GM23248 (cell line): ENCODE measurements at regions of chr12 and their contacts with region 1.

Region 1: DNA sequence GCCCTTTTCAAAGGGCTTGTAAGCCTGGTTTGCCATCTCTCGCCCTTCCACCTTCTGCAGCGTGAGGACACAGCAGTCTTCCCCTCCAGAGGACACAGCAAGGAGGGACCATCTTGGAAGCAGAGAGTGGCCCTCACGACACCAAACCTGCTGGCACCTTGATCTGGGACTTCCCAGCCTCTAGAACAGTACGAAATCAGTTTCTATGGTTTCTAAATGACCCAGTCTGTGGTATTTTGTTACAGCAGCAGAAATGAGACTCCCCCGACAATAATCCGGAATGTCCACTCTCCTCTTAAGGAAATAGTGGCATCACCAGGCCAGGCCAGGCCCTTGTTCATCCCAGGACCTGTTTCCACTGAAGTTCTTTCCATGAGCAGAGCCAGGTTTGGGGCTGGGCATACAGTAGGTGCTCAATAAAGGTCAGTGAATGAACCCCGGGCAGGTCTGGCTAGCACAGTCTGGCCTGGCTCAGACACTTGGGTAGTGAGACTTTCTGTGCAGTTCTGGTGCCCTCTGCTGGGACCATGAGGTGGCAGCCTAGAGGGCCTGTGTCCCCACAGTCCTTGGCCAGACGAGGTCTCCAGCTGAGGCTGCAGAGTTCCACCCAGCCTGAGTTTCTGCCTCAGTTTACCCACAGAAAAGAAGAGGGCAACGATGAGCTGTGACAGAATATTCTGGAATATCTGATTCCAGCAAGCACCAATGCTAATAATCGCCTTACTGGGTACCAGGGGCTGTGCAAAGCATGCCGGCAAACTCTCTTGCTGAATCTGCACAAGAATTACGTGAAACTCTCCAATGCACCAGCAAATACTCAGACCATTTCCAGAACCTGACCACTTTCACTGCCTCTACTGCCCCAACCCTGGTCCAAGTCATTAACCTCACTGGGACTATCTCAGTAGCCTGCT is 14.0 kb downstream of the ABCB9 start:
- DNase-seq: peak; percentile 83
- H3K4me3 ChIP-seq: no peak overlapping the region
- H3K27ac ChIP-seq: no peak overlapping the region
- H3K4me1 ChIP-seq: peaks cover 4% of the 10 kb centered on the region
- H3K27me3 ChIP-seq: no peaks in the 10 kb centered on the region

Region 2: DNA sequence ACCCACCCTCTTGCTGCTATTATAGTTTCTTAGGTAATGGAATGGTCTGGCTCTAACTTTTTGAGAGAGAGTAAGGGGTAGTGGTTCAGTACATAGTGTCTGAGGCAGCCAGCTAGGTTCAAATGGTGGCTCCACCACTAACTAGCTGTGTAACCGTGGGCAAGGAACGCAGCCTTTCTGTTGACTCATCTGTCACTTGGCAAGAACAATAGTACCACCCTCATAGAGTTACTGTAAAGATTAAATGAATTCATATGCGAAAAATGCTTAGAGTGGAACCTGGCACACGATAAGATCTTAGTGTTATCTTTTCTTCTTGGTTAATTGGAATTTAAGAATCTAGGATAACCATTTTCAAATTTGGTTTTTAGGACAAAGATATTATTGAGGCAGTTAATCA is 163.8 kb before region 1 on chr12:
- in situ Hi-C with region 1: loop called (anchors 10 kb)
- DNase-seq: peak; percentile 73
- H3K4me3 ChIP-seq: no peak overlapping the region
- H3K27ac ChIP-seq: no peak overlapping the region
- H3K4me1 ChIP-seq: peaks cover 24% of the 10 kb centered on the region
- H3K27me3 ChIP-seq: no peaks in the 10 kb centered on the region

Region 3: DNA sequence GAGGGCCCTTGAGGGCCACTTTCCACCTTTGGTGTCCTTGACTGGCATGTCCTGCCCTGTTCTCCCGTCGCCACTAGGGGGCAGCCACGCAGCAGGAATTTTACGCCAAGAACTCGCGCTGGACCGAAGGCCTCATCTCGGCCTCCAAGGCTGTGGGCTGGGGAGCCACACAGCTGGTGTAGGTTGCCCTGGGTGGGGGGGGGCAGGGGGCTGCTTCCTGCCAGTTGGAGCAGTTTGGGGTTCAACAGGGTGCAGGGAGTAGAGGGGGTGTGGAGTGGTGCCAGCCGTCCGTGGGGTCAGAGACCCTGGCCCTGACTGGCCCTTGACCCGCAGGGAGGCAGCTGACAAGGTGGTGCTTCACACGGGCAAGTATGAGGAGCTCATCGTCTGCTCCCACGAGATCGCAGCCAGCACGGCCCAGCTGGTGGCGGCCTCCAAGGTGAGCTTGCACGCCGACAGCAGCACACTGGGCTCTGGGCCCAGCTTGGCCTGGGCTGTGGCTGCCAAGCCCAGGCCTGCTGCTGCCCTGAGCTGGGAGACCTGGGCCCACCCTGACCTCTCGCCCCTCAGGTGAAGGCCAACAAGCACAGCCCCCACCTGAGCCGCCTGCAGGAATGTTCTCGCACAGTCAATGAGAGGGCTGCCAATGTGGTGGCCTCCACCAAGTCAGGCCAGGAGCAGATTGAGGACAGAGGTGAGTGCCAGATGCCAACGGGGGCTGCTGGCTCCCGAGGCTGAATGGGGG is 91.7 kb before region 1 on chr12:
- in situ Hi-C with region 1: loop called (anchors 5 kb)
- DNase-seq: peak; percentile 86
- H3K4me3 ChIP-seq: no peak overlapping the region
- H3K27ac ChIP-seq: no peak overlapping the region
- H3K4me1 ChIP-seq: no peaks in the 10 kb centered on the region
- H3K27me3 ChIP-seq: no peaks in the 10 kb centered on the region